ENCODE measurements at regions of chr5 and their contacts with region 1.

Region 1: GRCh38 chr5:75236322-75237316 is at the start of gene ANKRD31:
- DNase-seq: peak; percentile 88
- H3K4me3 Mint-ChIP-seq: peak within 1 kb of the TSS; percentile 95
- H3K27ac Mint-ChIP-seq: peak within 1 kb of the TSS; percentile 97
- H3K4me1 Mint-ChIP-seq: peaks cover 17% of the 10 kb centered on the region
- H3K27me3 Mint-ChIP-seq: no peaks in the 10 kb centered on the region
- total RNA-seq, gene ANKRD31: 0.35 to 0.36 TPM

Region 2: GRCh38 chr5:74240786-74241750 is 995.6 kb before region 1 on chr5:
- CTCF ChIA-PET with region 1: no interaction called
- intact Hi-C with region 1: no loop called
- DNase-seq: no peak
- H3K4me3 Mint-ChIP-seq: no peak overlapping the region
- H3K27ac Mint-ChIP-seq: no peak overlapping the region
- H3K4me1 Mint-ChIP-seq: no peaks in the 10 kb centered on the region
- H3K27me3 Mint-ChIP-seq: peaks cover 5% of the 10 kb centered on the region

Region 3: DNA sequence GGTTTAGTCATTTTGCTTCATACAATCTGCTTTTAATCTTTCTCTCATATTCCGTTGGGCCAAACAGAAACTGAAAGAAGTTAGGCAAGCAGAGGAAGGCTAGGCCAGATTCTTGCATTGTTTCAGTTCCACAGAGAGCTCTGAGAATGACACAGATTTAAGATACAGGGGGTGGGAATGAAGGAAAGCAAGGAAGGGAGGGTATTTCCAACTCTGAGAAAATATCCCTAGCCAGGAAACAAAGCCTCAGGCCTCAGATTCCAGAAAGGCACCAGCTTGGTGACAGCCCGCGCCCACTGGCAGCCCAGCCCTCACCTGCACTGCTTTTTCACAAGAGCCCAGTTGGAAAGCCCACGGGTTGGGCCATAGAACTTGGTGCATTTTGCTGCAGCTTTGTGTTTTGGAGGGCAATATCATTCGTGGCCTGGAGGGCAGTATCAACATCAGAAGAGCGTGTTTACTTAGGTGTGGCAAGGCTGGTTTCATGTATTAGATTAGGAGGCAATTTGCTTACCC is 659.6 kb before region 1 on chr5:
- CTCF ChIA-PET with region 1: no interaction called
- intact Hi-C with region 1: loop called (anchors 10 kb)
- DNase-seq: peak; percentile 13
- H3K4me3 Mint-ChIP-seq: no peak overlapping the region
- H3K27ac Mint-ChIP-seq: no peak overlapping the region
- H3K4me1 Mint-ChIP-seq: peaks cover 36% of the 10 kb centered on the region
- H3K27me3 Mint-ChIP-seq: peaks cover 1% of the 10 kb centered on the region

Region 4: GRCh38 chr5:75336625-75337339 is 100.2 kb after region 1 on chr5 and contains the start of gene HMGCR:
- CTCF ChIA-PET with region 1: interaction called, 17 read pairs
- intact Hi-C with region 1: loop called (anchors 1 kb)
- DNase-seq: peak; percentile 99
- H3K4me3 Mint-ChIP-seq: no peak within 1 kb of the TSS
- H3K27ac Mint-ChIP-seq: no peak within 1 kb of the TSS
- H3K4me1 Mint-ChIP-seq: peaks cover 35% of the 10 kb centered on the region
- H3K27me3 Mint-ChIP-seq: no peaks in the 10 kb centered on the region
- total RNA-seq, gene HMGCR: 61.7 to 67.5 TPM

Region 5: DNA sequence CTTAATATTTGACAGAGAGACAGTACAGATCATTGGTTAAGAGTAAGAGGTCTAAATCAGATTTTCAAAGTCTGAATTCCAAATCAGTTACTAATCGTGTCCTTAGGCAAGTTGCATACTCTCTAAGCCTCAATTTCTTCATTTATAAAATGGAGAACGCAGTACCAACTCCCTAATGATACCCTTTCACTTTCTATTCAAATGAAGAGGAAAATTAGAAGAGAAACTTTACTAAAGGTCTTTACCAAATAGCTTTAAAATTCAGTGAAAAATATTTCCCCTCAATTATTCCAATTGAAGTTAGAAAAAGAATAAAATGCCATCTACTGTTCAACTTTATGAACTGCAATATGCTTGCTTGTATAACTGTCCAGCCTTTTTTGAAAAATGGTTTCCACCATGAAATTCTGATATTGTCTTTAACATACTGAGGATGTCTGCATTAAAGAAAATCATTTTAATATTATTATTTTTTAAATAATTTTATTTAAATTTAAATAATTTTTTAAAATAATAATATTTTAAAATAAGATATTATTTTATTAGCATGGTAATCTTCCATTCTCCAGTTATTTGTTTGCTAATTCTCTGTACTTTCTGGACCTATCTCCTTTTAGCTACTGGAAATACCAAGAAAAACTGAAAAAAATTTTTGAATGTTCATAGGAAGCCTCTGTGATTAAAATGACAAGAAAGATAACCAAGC is 444.7 kb after region 1 on chr5:
- CTCF ChIA-PET with region 1: interaction called, 13 read pairs
- intact Hi-C with region 1: loop called (anchors 1 kb)
- DNase-seq: no peak
- H3K4me3 Mint-ChIP-seq: no peak overlapping the region
- H3K27ac Mint-ChIP-seq: no peak overlapping the region
- H3K4me1 Mint-ChIP-seq: peaks cover 12% of the 10 kb centered on the region
- H3K27me3 Mint-ChIP-seq: no peaks in the 10 kb centered on the region

Region 6: DNA sequence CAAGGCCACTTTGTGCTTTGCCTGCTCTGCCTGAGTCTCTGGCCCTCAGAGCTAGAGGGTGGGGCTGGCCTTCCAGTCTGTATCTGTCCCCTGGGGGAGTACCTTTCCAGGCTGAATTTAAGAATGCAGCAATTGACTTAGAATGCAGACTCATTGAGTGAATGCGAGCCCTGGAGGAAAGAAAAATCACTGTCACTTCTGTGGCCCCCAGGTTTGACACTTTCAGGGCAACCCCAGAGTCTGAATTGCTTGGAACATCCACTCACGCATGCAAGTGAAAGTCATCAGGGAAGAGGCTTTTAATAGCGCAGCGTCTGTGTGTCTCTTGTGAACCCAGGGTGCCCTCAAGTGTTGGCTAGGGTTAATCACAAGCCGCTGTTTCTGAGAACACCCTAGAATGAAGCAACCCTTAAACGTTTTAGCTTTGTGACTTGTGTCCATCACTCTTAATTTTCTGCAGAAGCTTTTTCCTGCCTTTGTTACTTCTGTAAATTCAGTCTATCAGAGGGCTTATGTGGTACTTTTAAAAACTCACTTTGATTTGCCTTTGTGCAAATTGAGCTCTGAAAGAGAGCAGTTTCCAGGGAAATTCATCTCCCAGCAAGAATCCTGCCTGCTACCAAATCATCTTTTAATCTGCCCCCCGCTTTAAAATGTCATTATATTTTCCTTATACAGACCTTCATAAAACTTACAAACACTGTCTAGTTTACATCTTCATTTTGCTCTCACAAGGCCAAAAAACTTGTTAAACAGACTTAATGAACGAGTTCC is 1019.7 kb after region 1 on chr5:
- CTCF ChIA-PET with region 1: no interaction called
- intact Hi-C with region 1: loop called (anchors 2 kb)
- DNase-seq: peak; percentile 79
- H3K4me3 Mint-ChIP-seq: no peak overlapping the region
- H3K27ac Mint-ChIP-seq: no peak overlapping the region
- H3K4me1 Mint-ChIP-seq: peaks cover 2% of the 10 kb centered on the region
- H3K27me3 Mint-ChIP-seq: peaks cover 3% of the 10 kb centered on the region

Measured in activated naive CD4-positive, alpha-beta T cell treated with anti-CD3 and anti-CD28 coated beads for 36 hours (primary cell).